Activated CD4-positive, alpha-beta T cell treated with anti-CD3 and anti-CD28 coated beads for 36 hours (primary cell): ENCODE measurements at regions of chr16 and their contacts with region 1.

Region 1: DNA sequence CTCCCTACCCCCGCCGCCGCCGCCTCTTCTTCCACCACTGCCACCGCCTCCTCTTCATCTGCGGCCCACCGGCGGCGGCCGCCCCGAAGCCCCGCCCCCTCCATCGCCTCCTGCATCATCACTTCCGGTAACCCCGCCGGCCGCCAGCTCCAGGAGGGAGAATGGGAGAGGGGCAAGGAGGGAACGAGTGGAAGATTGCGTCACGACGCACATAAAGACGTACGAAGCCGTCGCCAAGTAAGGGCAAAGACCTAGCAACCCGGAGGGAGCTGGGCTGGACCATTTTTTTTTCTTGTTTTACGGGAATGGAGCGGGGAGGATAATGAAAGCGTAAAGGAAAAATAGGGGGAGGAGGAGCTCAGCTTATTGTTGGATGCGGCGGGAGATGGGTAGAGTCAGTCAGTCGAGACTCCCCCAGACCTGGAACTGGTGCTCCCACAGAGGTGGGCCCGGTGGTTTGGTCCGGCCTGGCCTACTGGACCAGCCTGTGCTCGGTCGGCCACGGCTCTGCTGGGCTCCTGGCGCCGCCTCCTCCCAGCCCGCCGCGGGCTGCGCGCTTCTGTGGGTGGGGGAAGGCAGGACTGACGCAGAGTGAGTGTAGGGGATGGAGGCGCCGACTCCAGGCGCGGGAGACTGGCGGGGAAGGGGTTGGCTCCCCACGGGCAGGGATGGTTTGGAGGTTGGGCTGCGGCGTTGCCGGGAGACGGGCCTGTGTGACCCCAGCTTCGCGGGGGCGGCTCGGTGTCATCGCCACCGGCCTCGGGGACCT is at the starts of genes DCUN1D3 and LYRM1:
- DNase-seq: peak; percentile 95
- ATAC-seq: peak; percentile 86
- H3K4me3 Mint-ChIP-seq: peak within 1 kb of the TSS; percentile 83
- H3K27ac Mint-ChIP-seq: peak within 1 kb of the TSS; percentile 94
- H3K4me1 Mint-ChIP-seq: peaks cover 60% of the 10 kb centered on the region
- H3K27me3 Mint-ChIP-seq: no peaks in the 10 kb centered on the region
- total RNA-seq, gene DCUN1D3: 4.2 to 5.1 TPM
- total RNA-seq, gene LYRM1: 24.7 to 29.5 TPM

Region 2: DNA sequence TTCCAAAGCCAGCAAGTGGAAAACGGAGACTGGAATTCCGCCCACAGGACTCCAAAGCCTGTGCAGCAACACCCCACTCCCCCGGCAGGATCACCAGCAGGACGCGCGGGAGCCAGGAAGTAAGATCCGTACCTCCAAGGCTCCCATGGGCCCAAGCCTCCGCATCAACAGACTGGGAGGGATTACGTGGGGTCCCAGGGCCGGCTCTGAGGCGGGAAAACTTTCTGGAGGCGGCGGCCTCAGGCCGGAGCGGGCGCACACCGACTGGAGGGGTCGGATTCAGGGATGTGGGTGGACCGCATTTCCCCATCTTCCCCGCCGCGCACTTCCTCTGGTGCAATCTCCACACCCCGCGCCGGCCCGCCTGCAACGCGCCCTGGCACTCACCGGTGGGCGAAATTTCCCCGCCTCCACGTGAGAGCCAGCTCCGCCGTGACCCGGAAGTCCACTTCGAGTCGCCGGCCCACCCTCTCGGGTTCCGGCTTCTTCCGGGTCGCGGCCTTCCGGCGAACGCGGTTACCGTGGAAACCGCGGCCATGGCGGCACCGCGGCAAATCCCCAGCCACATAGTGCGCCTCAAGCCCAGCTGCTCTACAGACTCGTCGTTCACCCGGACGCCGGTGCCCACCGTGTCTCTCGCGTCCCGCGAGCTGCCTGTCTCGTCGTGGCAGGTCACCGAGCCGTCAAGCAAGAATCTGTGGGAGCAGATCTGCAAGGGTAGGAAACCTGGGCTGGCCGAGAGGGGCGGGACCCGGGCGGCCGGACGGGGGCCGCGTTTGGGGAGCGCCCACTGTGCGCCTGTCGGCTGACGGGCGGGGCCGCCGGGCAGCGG is 1182.5 kb before region 1 on chr16 and contains the starts of genes IQCK and KNOP1:
- CTCF ChIA-PET with region 1: no interaction called
- POLR2A ChIA-PET with region 1: no interaction called
- intact Hi-C with region 1: loop called in 1 of 2 experiments (anchors 5 kb)
- DNase-seq: peak; percentile 93
- ATAC-seq: peak; percentile 93
- H3K4me3 Mint-ChIP-seq: peak within 1 kb of the TSS; percentile 95
- H3K27ac Mint-ChIP-seq: peak within 1 kb of the TSS; percentile 87
- H3K4me1 Mint-ChIP-seq: peaks cover 23% of the 10 kb centered on the region
- H3K27me3 Mint-ChIP-seq: no peaks in the 10 kb centered on the region
- total RNA-seq, gene IQCK: 2.7 to 3.5 TPM
- total RNA-seq, gene KNOP1: 28.9 to 29.5 TPM

Region 3: DNA sequence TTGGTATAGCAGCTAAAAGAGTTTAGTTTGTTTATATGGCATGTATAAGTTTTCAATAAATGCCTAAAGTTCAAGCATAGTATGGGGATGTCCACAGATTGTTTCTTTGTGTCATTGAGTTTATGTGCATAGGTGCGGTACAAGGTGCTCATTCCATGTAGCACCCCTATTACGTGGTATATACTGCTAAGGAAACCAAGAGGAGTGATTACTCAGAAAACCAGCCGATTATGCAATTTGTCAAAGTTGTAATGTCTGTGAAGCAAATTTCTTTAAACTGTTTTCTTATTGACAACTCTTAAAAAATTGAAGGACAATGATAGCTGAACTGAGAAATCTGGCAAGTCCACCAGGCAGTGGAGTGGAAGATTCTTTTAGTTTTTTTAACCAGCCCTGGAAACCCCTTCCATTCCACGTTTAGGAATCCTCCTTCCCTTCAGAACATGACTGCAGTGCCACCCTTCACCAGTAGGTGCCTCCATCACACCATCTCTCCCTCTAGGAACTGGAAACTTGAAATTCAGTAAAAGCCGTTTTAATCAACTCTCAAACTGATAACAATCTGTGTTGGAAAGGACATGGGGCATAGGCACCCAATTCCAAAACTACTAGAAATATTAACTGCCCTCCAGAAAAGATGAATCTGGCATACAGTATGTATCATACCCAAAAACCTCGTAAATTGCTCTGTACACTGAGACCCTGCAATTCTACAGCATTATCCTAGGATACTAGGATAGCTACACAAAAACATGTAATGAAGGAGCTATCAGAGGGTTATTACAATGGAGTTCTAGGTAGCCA is 50.7 kb before region 1 on chr16:
- CTCF ChIA-PET with region 1: interaction called, 3 read pairs
- POLR2A ChIA-PET with region 1: no interaction called
- intact Hi-C with region 1: loop called in 1 of 2 experiments (anchors 2 kb)
- DNase-seq: peak; percentile 78
- ATAC-seq: peak; percentile 57
- H3K4me3 Mint-ChIP-seq: no peak overlapping the region
- H3K27ac Mint-ChIP-seq: no peak overlapping the region
- H3K4me1 Mint-ChIP-seq: peaks cover 13% of the 10 kb centered on the region
- H3K27me3 Mint-ChIP-seq: no peaks in the 10 kb centered on the region

Region 4: GRCh38 chr16:20910781-20911321 is 10.4 kb after region 1 on chr16:
- CTCF ChIA-PET with region 1: no interaction called
- POLR2A ChIA-PET with region 1: interaction called, 4 read pairs
- intact Hi-C with region 1: loop called (anchors 1 kb)
- DNase-seq: no peak
- ATAC-seq: peak; percentile 80
- H3K4me3 Mint-ChIP-seq: no peak overlapping the region
- H3K27ac Mint-ChIP-seq: peak overlapping the region; percentile 62
- H3K4me1 Mint-ChIP-seq: peaks cover 23% of the 10 kb centered on the region
- H3K27me3 Mint-ChIP-seq: no peaks in the 10 kb centered on the region

Region 5: DNA sequence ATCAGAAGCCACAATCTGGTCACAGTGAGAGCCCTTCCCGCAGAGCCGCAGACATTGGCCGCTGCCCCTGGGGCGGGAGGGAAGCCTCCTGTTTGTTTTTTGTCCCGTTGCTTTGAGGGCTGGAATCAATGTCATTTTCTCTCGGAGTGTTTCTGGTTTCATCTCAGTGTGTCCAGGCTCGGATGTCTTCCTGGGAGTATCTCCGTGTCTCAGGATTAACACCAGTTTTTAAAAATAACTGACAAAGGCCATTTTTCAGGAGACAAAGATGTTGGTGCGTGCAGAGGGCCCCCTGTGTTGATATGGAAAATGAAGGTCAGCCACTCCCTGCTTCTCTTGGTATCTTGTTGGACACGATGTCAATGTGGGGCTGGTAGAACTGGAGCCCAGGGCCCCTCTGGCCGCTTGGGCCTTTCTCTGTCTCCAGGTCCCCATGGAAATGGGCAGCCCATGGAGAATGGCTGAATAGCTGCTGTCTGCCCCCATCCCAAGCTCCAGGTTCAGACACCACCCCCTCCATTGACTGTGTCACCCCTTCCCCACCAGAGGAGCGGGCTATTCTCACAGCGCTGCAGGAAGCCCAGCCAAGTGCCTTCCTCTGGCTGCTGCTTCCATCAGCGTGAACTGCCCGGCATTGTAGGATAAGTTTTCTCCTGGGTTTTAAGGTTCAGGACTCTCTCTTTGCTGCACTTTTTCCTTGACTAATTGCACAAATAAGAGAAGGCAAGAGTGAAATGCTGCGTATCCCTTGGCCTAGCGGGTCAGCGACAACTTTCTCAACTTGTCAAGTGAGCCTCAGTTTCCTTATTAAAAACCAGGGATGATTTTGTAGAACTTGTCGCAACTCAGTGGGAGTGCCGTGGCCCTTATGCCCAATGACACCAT is 626.7 kb after region 1 on chr16:
- CTCF ChIA-PET with region 1: no interaction called
- POLR2A ChIA-PET with region 1: no interaction called
- intact Hi-C with region 1: loop called (anchors 5 to 10 kb)
- DNase-seq: no peak
- ATAC-seq: no peak
- H3K4me3 Mint-ChIP-seq: no peak overlapping the region
- H3K27ac Mint-ChIP-seq: no peak overlapping the region
- H3K4me1 Mint-ChIP-seq: no peaks in the 10 kb centered on the region
- H3K27me3 Mint-ChIP-seq: no peaks in the 10 kb centered on the region

Region 6: DNA sequence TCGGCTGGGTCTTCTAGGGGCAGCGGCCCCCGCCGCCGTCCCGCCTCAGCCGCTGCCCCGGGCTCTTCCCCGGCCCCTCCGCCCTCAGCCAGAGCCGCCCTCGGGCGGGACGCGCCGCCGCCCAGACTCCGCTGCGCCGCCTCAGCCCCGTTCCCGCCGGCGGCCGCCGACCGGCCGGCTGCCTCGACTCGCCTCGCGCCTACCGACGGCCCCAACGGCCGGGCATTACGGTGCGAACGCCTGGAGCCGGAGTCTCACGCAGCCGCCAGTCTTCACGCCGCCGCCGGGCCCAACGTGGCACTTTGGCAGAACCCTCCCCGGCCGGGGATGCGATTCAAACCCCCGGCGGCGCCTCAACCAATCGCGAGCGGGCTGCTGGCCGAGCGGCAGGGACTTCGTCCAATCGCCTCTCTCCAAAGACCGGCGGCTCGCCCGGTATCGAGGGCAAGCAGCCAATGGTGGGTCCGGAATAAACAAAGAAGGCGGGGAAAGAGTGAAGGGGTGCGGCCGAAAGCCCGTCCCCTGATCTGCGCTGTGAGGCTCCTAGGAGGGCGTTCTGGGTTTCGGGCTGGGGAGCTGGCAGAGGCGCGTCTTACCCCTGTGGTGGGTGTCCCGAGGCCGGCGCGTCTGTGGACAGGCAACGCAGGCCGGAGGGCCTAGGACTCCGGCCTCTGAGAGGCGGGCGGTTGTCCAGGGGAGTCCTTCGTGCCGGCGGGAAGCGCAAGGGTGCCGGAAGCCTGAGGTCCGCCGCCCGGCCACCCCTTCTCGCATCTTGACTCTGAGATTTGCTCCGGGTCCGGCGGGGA is 1474.0 kb after region 1 on chr16 and contains the start of gene CDR2:
- CTCF ChIA-PET with region 1: no interaction called
- POLR2A ChIA-PET with region 1: no interaction called
- intact Hi-C with region 1: loop called in 1 of 2 experiments (anchors 1 kb)
- DNase-seq: peak; percentile 99
- ATAC-seq: peak; percentile 95
- H3K4me3 Mint-ChIP-seq: peak within 1 kb of the TSS; percentile 97
- H3K27ac Mint-ChIP-seq: peak within 1 kb of the TSS; percentile 95
- H3K4me1 Mint-ChIP-seq: peaks cover 38% of the 10 kb centered on the region
- H3K27me3 Mint-ChIP-seq: no peaks in the 10 kb centered on the region
- total RNA-seq, gene CDR2: 29.5 to 33.7 TPM